AG04450 (cell line): ENCODE measurements at regions of chr3 and their contacts with region 1.

Region 1: GRCh38 chr3:14203521-14204079 is 25.0 kb downstream of the LSM3 start:
- DNase-seq: peak; percentile 77
- H3K4me3 ChIP-seq: no peak overlapping the region
- H3K27ac ChIP-seq: no peak overlapping the region
- H3K27me3 ChIP-seq: no peaks in the 10 kb centered on the region
- CTCF ChIP-seq: peak; percentile 91

Region 2: DNA sequence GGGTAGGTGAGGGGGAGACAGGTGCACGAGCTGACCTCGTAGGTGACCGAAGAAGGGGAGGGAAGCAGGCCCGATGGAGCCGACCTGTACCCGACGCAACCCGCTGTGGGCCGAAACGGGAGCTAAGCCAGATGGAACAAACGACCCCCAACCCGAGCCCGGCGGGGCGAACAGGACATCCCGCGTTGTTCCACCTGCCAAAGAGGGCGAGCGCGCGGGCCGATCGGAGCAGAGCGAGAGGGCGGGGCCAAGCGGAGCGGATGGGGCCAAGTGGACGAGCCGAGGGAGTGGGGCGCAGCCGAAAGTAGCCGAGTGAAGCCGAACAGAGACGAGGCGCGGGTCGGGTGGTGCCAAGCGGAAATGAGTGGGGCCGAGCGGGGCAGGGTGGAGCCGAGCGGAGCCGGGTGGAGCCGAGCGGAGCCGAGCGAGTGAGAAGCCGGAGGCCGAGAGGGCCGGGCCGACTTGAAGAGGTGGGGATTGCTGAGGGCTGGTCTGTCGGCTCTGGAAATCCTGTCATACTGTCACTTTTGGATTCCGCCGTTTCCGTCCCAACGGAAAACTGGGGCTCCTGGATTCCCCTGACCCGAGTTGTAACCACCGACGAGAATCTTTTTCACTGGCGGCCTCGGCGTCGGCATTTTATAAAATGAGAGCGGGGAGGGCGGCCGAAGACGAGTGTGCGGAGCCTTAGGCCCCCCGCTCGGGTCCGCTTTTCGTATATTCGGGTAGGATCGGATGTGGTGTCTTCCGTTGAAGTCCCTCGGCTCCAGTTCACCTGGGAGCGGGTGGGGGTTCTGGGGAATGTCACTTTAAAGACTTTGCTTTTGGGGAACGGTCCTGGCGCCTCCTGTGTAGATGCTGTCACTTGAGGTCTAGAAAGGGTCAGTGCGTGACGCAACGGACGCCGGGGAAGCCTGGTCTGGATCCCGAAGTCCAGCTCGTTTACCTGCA is 308.2 kb before region 1 on chr3:
- CTCF ChIA-PET with region 1: interaction called, 19 read pairs
- POLR2A ChIA-PET with region 1: no interaction called
- DNase-seq: peak; percentile 44
- H3K4me3 ChIP-seq: peak overlapping the region; percentile 62
- H3K27ac ChIP-seq: no peak overlapping the region
- H3K27me3 ChIP-seq: peaks cover 13% of the 10 kb centered on the region
- CTCF ChIP-seq: no peak

Region 3: DNA sequence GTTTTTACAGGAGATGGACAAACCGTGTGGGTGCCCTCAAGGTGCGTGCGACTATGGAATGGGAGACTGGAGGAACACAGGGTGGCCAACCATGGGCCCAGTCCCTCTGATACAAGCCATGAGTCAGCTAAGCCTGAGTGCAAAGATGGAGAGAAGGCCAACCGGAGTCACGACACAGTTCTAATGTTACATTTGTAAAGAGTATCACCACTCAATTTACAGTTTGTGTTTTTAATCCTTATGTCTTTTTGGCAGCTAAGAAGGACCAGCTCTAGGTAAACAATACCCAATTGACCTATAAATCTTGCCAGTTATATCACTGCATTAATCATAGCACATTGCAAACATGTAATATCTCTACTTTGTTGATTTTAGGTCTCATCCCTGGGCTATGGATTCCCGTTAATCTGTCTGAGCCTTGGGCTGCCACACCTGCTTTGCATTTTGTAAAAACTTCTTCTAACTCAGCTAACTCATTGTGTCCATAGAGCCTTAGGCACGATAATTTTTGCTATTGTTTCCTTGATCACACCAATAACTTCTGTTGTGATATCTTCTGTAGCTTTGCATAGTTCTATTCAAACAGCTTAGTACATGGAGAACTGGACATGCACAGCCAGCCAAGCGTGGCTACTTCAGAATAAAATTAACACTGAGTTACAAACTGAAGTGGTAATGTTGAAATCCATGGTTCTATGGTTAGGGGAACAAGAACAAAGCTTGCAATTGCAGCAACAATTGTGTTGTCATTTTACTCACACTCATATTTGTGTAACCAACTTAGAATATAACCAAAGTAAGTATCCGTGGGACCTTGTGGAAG is 25.3 kb after region 1 on chr3:
- CTCF ChIA-PET with region 1: interaction called, 42 read pairs
- POLR2A ChIA-PET with region 1: interaction called, 3 read pairs
- DNase-seq: no peak
- H3K4me3 ChIP-seq: no peak overlapping the region
- H3K27ac ChIP-seq: no peak overlapping the region
- H3K27me3 ChIP-seq: no peaks in the 10 kb centered on the region
- CTCF ChIP-seq: no peak

Region 4: GRCh38 chr3:14266361-14266760 is 62.8 kb after region 1 on chr3:
- CTCF ChIA-PET with region 1: interaction called, 112 read pairs
- POLR2A ChIA-PET with region 1: no interaction called
- DNase-seq: peak; percentile 75
- H3K4me3 ChIP-seq: no peak overlapping the region
- H3K27ac ChIP-seq: no peak overlapping the region
- H3K27me3 ChIP-seq: peaks cover 7% of the 10 kb centered on the region
- CTCF ChIP-seq: no peak

Region 5: DNA sequence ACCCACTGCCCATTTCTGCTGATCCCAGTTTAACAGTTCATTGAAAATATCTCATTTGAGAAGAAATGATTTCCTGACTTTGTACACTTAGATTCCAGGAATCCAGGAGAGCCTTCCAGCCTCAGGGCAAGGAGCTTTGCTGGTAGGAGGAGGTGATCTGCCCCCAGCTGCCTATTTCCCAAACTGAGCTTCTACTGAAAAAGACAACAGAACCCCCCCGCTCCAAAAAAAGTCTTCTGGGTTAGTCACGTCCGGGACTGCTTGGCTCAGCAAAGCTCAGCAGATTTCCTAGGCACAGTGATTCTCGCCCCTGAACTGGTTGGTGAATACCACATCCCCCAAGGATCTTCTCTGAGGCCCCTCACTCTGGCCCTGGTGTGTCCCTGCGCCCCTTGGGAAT is 211.9 kb after region 1 on chr3:
- CTCF ChIA-PET with region 1: interaction called, 13 read pairs
- POLR2A ChIA-PET with region 1: interaction called, 6 read pairs
- DNase-seq: no peak
- H3K4me3 ChIP-seq: no peak overlapping the region
- H3K27ac ChIP-seq: peak overlapping the region; percentile 31
- H3K27me3 ChIP-seq: no peaks in the 10 kb centered on the region
- CTCF ChIP-seq: no peak

Region 6: GRCh38 chr3:14467814-14468620 is 264.4 kb after region 1 on chr3:
- CTCF ChIA-PET with region 1: interaction called, 153 read pairs
- POLR2A ChIA-PET with region 1: interaction called, 3 read pairs
- DNase-seq: no peak
- H3K4me3 ChIP-seq: no peak overlapping the region
- H3K27ac ChIP-seq: no peak overlapping the region
- H3K27me3 ChIP-seq: no peaks in the 10 kb centered on the region
- CTCF ChIP-seq: peak; percentile 87

Region 7: GRCh38 chr3:14921078-14921616 is 717.5 kb after region 1 on chr3:
- CTCF ChIA-PET with region 1: interaction called, 11 read pairs
- POLR2A ChIA-PET with region 1: no interaction called
- DNase-seq: peak; percentile 72
- H3K4me3 ChIP-seq: no peak overlapping the region
- H3K27ac ChIP-seq: no peak overlapping the region
- H3K27me3 ChIP-seq: peaks cover 7% of the 10 kb centered on the region
- CTCF ChIP-seq: peak; percentile 95